Mucosa of descending colon (tissue), 3 donors: ENCODE measurements at regions of chr2 and their contacts with region 1.

Region 1: GRCh38 chr2:101012706-101013181 is 10.7 kb downstream of the RPL31 start:
- DNase-seq: peak in 1 of 3 donors; percentile 72
- ATAC-seq: peak; percentile 65
- H3K4me3 ChIP-seq: no peak overlapping the region
- H3K4me1 ChIP-seq: no peaks in the 10 kb centered on the region
- CTCF ChIP-seq: peak; percentile 70

Region 2: GRCh38 chr2:101205521-101205998 is 192.8 kb after region 1 on chr2:
- intact Hi-C with region 1: loop called in 1 of 2 experiments (anchors 10 kb)
- DNase-seq: peak in 1 of 3 donors; percentile 59
- ATAC-seq: peak; percentile 93
- H3K4me3 ChIP-seq: no peak overlapping the region
- H3K4me1 ChIP-seq: no peaks in the 10 kb centered on the region
- CTCF ChIP-seq: no peak